Transverse colon (tissue), 4 donors: ENCODE measurements at regions of chr11 and their contacts with region 1.

Region 1: DNA sequence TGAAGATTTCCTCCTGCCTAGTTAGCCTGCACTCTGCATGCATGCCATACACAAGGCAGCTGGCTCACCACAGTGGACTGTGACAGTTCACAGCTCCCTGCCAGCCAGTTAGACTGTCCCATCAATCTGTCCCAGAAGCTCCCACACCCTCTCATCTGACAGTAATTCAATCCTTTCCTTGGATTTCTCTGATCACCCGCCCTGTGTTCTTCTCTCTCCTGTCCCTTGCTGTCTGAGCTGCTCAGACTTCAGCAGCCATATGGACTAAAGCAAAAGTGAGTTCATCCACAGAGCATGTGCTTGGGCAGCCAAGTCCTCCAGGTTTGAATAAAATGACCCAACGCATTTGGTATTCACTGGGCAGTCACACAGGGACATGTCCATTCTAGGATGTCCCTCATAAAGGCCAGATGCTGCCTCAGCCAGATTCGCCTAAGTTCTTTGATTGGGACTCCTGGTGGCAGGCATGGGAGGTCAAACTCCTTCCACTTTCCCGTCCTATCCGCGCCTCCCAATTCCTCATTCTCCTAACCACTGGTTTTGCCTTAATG is 54.5 kb upstream of the ZBTB44 start:
- DNase-seq: no peak
- H3K4me3 ChIP-seq: no peak overlapping the region
- H3K27ac ChIP-seq: no peak overlapping the region
- H3K4me1 ChIP-seq: no peaks in the 10 kb centered on the region
- H3K27me3 ChIP-seq: no peaks in the 10 kb centered on the region
- CTCF ChIP-seq: no peak
- EP300 ChIP-seq: no peak
- POLR2A ChIP-seq: no peak

Region 2: DNA sequence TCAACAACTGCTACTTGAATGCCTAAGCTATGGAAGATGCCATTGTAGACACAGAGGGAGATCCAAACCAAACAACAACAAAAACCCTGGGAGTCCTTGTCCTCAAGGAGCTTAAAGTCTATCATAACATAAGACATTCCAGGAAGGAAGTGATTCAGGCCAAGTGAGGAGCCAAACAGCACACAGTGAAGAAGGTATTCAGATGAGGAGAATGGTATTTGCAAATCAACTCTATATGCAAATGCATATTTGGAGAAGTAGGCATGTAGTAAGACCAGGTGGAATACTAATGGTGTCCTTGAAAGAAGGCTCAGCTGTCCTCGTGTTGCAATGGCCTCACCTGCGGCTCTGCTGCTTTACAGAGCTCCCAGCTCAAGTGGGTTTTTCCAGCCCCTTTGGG is 966.4 kb before region 1 on chr11:
- in situ Hi-C with region 1: no loop called
- intact Hi-C with region 1: loop called (anchors 5 kb)
- DNase-seq: no peak
- H3K4me3 ChIP-seq: no peak overlapping the region
- H3K27ac ChIP-seq: no peak overlapping the region
- H3K4me1 ChIP-seq: no peaks in the 10 kb centered on the region
- H3K27me3 ChIP-seq: no peaks in the 10 kb centered on the region
- CTCF ChIP-seq: no peak
- EP300 ChIP-seq: no peak
- POLR2A ChIP-seq: no peak

Region 3: DNA sequence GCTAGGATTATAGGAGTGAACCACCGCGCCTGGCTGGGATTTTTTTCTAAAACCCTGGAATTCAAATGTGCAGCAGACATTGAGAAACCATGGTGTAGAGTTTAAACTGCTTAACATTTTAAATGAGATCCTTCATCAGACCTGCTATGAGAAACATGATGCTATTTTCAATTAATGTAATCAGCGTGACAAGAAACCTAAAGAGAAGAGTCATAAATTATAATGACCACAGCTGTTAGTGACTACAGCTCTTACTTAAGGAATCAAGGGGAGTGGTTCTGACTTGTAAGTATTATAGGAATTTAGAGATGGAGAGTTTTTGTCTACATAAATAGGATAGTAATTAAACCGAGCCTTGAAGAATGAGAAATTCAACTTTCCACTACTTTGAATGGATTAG is 823.0 kb before region 1 on chr11:
- in situ Hi-C with region 1: no loop called
- intact Hi-C with region 1: no loop called
- DNase-seq: no peak
- H3K4me3 ChIP-seq: no peak overlapping the region
- H3K27ac ChIP-seq: no peak overlapping the region
- H3K4me1 ChIP-seq: no peaks in the 10 kb centered on the region
- H3K27me3 ChIP-seq: no peaks in the 10 kb centered on the region
- CTCF ChIP-seq: no peak
- EP300 ChIP-seq: no peak
- POLR2A ChIP-seq: no peak